ENCODE measurements at regions of chr4 and their contacts with region 1.

Region 1: GRCh38 chr4:99894161-99894997 is at the start of gene LAMTOR3:
- DNase-seq: peak; percentile 60 to 87
- ATAC-seq: peak; percentile 99 to 100
- H3K4me3 ChIP-seq: peak within 1 kb of the TSS; percentile 79
- H3K27ac ChIP-seq: peak within 1 kb of the TSS; percentile 78 to 91
- H3K4me1 ChIP-seq: peaks cover 6% of the 10 kb centered on the region; the same call in 1 of the 3 replicates
- CTCF ChIP-seq: no peak
- EP300 ChIP-seq: no peak
- POLR2A ChIP-seq: 0 out of 2 replicates have a peak, but pooled peaks have one; percentile 12
- RAD21 ChIP-seq: no peak
- polyA plus RNA-seq, gene LAMTOR3: 30.7 and 40.8 TPM in 2 replicates

Region 2: GRCh38 chr4:99563310-99564186 is 330.8 kb before region 1 on chr4 and contains the start of gene TRMT10A:
- CTCF ChIA-PET with region 1: no interaction called
- POLR2A ChIA-PET with region 1: interaction called, 15 read pairs
- DNase-seq: peak; percentile 70 to 96
- ATAC-seq: peak; percentile 98 to 99
- H3K4me3 ChIP-seq: peak within 1 kb of the TSS; percentile 76
- H3K27ac ChIP-seq: peak within 1 kb of the TSS; percentile 92 to 95
- H3K4me1 ChIP-seq: 0 out of 3 replicates have a peak, but pooled peaks cover 4% of the 10 kb centered on the region
- CTCF ChIP-seq: no peak
- EP300 ChIP-seq: no peak
- POLR2A ChIP-seq: peak; percentile 22; the same call in 1 of the 2 replicates
- RAD21 ChIP-seq: no peak
- polyA plus RNA-seq, gene TRMT10A: 7.2 and 10.6 TPM in 2 replicates

Region 3: DNA sequence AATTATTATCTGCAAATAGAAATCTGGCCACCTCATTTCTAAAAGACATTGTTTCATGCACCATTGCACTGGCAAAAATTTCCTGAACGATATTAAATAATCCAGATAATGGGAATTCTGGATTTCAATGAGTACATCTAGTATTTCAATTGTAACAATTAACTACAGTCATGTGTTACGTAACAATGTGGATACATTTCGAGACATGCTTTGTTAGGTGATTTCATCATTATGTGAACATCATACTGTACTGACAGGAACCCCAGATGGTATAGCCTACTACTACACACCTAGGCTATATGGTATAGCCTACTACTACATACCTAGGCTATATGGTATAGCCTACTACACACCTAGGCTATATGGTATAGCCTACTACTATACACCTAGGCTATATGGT is 14.9 kb before region 1 on chr4:
- CTCF ChIA-PET with region 1: no interaction called
- POLR2A ChIA-PET with region 1: no interaction called
- DNase-seq: no peak
- ATAC-seq: no peak
- H3K4me3 ChIP-seq: no peak overlapping the region
- H3K27ac ChIP-seq: no peak overlapping the region
- H3K4me1 ChIP-seq: no peaks in the 10 kb centered on the region
- CTCF ChIP-seq: no peak
- EP300 ChIP-seq: no peak
- POLR2A ChIP-seq: no peak
- RAD21 ChIP-seq: no peak

Region 4: DNA sequence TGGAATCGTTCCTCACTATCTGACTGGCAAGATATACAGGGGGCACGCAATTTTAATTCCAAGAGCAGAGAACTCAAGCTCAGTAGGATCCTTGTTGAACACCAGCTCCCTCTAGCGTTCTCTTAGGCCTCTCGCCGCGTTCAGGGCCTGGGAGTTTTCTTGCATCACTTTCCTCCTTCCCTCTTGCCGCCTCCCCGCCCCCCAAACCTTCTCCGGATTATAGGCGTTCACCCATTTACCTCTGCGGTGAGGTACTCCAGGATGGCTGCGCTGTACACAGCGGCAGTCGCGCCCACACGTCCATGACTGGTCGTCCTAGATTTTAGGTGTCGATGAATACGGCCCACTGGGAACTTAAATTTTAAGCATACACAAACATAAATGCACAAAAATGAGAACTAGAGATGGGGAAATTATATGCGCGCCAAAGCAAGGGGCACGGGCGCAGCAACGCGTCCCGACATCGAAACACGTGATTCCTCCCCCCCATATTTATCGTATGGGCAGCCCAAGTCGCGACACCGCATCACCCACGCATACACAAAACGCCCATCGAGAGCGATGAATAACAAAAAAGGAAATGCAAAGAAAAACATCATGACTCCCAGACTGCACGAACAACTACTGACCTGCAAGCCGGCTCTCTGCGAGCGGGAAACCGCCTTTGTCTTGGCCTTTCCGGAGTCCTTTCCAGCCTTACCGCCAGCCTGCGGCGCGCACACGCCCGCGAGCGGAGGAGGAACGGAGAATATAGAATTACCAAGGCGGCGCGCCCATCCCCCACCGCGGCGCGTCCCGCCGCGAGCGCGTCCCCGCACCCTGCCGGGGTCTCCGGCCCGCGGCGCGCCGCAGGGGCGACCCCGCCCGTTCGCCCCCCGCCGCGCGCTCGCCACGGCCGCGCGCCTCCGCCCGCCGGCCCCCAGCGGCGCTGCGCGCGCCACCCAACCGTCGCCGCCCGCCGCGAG is 54.9 kb after region 1 on chr4:
- CTCF ChIA-PET with region 1: interaction called, 7 read pairs
- POLR2A ChIA-PET with region 1: interaction called, 14 read pairs
- DNase-seq: peak in 1 of 2 experiments; percentile 92
- ATAC-seq: peak; percentile 46 to 54
- H3K4me3 ChIP-seq: peak overlapping the region; percentile 97
- H3K27ac ChIP-seq: peak overlapping the region; percentile 96 to 99
- H3K4me1 ChIP-seq: peaks cover 24% of the 10 kb centered on the region
- CTCF ChIP-seq: peak; percentile 59
- EP300 ChIP-seq: no peak
- POLR2A ChIP-seq: no peak
- RAD21 ChIP-seq: peak; percentile 43 to 48; a peak in 3 of 5 replicates

Region 5: GRCh38 chr4:101033986-101034385 is 1139.6 kb after region 1 on chr4:
- CTCF ChIA-PET with region 1: no interaction called
- POLR2A ChIA-PET with region 1: no interaction called
- DNase-seq: no peak
- ATAC-seq: peak in 1 of 2 experiments; percentile 41; a peak in 1 of 6 replicates
- H3K4me3 ChIP-seq: no peak overlapping the region
- H3K27ac ChIP-seq: no peak overlapping the region
- H3K4me1 ChIP-seq: no peaks in the 10 kb centered on the region
- CTCF ChIP-seq: no peak
- EP300 ChIP-seq: no peak
- POLR2A ChIP-seq: no peak
- RAD21 ChIP-seq: no peak

Measured in A549 (cell line).